ENCODE measurements at regions of chr5 and their contacts with region 1.

Region 1: GRCh38 chr5:104170926-104171325 is 608.3 kb upstream of the NUDT12 start:
- DNase-seq: no peak
- CTCF ChIP-seq: no peak

Region 2: GRCh38 chr5:103582364-103582763 is 588.6 kb before region 1 on chr5:
- in situ Hi-C with region 1: loop called (anchors 25 kb)
- DNase-seq: peak; percentile 12
- CTCF ChIP-seq: peak; percentile 50